Common myeloid progenitor, CD34-positive (primary cell): ENCODE measurements at regions of chr1 and their contacts with region 1.

Region 1: GRCh38 chr1:64882574-64883255 is 83.6 kb downstream of the JAK1 start:
- DNase-seq: no peak
- H3K4me3 ChIP-seq: no peak overlapping the region
- H3K27ac ChIP-seq: no peak overlapping the region
- H3K4me1 ChIP-seq: no peaks in the 10 kb centered on the region
- H3K27me3 ChIP-seq: no peaks in the 10 kb centered on the region

Region 2: DNA sequence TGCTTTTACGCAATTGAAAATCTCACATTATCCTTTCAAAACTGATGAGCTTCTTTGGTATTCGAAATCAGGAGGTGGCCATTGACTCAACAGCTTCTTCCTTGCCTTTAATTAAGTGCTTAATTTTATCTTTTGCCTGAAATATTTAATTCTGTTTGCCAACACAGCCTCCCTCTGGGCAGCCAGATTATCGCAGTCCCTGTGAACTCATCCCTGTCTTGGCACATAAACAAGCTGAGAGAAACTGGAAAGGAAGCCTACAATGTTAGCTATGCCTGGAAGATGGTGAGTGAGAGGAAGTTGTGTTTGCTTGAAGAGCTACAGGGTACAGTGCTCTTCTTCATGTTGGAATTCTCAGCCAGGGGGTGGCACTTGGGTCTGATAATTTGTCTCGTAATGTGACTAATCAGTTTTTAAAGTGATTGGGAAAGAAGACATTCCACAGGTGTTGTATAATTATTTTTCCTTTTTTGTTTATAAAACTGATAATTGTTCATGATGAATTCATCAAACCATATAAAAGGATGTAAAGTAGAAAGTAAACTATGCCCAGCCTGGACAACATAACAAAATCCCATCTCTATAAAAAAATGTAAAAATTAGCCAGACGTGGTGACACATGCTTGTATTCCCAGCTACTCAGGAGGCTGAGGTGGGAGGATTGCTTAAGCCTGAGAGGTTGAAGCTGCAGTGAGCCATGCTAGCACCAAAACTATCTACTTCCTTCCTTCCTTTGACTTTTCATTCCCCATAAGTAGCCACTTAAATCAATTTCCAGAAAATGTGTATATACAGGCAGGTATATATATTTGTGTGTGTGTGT is 228.0 kb before region 1 on chr1:
- CTCF ChIA-PET with region 1: no interaction called
- POLR2A ChIA-PET with region 1: no interaction called
- DNase-seq: no peak
- H3K4me3 ChIP-seq: no peak overlapping the region
- H3K27ac ChIP-seq: no peak overlapping the region
- H3K4me1 ChIP-seq: no peaks in the 10 kb centered on the region
- H3K27me3 ChIP-seq: no peaks in the 10 kb centered on the region

Region 3: GRCh38 chr1:64798872-64799271 is 83.8 kb before region 1 on chr1:
- CTCF ChIA-PET with region 1: no interaction called
- POLR2A ChIA-PET with region 1: no interaction called
- DNase-seq: no peak
- H3K4me3 ChIP-seq: no peak overlapping the region
- H3K27ac ChIP-seq: no peak overlapping the region
- H3K4me1 ChIP-seq: no peaks in the 10 kb centered on the region
- H3K27me3 ChIP-seq: no peaks in the 10 kb centered on the region

Region 4: DNA sequence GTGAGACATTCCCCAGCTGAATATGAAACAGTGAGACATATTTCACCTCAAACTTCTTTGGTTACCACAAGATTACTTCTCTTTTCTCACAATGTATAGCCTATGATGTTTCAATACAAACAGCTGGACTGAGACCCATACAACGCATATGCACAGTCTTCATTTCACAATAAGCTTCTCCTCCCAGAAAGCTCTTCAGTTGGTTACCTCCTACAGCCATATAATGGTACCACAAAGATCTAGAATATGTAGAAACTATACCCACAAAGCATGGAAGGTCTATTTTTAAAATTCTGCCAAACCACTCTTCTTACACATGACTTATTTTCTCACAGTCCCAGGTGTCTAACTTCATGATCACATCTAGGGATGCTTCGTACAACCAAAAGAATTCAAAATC is 12.8 kb after region 1 on chr1:
- CTCF ChIA-PET with region 1: interaction called, 16 read pairs
- POLR2A ChIA-PET with region 1: no interaction called
- DNase-seq: peak; percentile 17 to 85 (median 77)
- H3K4me3 ChIP-seq: no peak overlapping the region
- H3K27ac ChIP-seq: no peak overlapping the region
- H3K4me1 ChIP-seq: peaks cover 5 to 41% (median 27%) of the 10 kb centered on the region in 4 experiments
- H3K27me3 ChIP-seq: no peaks in the 10 kb centered on the region